ENCODE measurements at regions of chr11 and their contacts with region 1.

Region 1: GRCh38 chr11:58900479-58901420 is 38.5 kb upstream of the GLYATL1 start:
- DNase-seq: peak; percentile 78 to 83 (median 82)
- H3K4me3 ChIP-seq: peak overlapping the region in 3 of 7 experiments; percentile 20 to 68 (median 58)
- H3K27ac ChIP-seq: no peak overlapping the region
- H3K4me1 ChIP-seq: peaks cover 0 to 26% (median 13%) of the 10 kb centered on the region in 4 experiments
- H3K27me3 ChIP-seq: peaks cover 0 to 28% (median 5%) of the 10 kb centered on the region in 5 experiments

Region 2: DNA sequence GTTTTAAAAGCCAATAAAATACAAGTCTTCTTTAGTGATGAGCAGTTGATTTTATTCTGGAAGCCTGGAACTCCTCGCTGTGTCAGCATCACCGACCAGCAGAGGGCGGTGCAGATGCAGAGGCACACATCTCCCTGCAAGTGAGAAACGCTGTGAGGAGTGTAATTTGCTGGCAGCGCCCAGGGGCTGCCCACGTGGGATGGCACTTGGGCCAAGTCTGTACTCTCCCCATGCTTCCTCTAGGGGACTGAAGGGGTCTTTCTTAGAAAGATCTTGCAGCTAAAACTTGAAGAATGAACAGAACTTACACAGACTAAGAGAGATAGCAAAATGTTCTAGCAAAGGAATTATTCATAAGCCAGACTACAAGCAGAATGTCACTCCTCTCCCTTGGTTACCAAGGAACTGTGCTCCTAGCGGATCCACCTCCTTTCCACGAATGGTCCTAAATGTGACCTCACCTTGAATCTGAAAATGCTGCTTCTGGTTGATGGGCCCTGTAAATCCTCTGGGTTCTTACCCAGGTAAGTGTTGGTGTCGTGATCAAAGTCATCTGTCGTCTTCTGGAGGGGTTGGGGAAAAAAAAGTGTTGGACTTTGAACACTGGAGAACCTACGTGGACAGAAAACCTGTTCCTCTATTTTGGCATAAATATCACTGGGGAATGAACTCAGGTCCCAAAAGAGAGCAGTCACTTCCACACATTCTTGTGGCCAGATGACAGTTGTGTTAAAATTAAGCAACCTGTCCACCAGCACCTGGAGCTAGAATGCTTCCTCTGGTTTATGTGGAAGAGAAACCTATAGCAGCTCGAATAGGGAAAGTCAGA is 246.5 kb before region 1 on chr11:
- CTCF ChIA-PET with region 1: interaction called, 42 read pairs
- POLR2A ChIA-PET with region 1: no interaction called
- DNase-seq: peak; percentile 88 to 95 (median 94)
- H3K4me3 ChIP-seq: no peak overlapping the region
- H3K27ac ChIP-seq: no peak overlapping the region
- H3K4me1 ChIP-seq: peaks cover 0 to 4% (median 0%) of the 10 kb centered on the region in 4 experiments
- H3K27me3 ChIP-seq: no peaks in the 10 kb centered on the region

Region 3: GRCh38 chr11:58867556-58867955 is 33.2 kb before region 1 on chr11:
- CTCF ChIA-PET with region 1: no interaction called
- POLR2A ChIA-PET with region 1: no interaction called
- DNase-seq: no peak
- H3K4me3 ChIP-seq: no peak overlapping the region
- H3K27ac ChIP-seq: no peak overlapping the region
- H3K4me1 ChIP-seq: no peaks in the 10 kb centered on the region
- H3K27me3 ChIP-seq: no peaks in the 10 kb centered on the region

Region 4: GRCh38 chr11:58919980-58920379 is 19.2 kb after region 1 on chr11:
- CTCF ChIA-PET with region 1: interaction called, 31 read pairs
- POLR2A ChIA-PET with region 1: no interaction called
- DNase-seq: peak in 2 of 3 donors; percentile 31 to 34
- H3K4me3 ChIP-seq: no peak overlapping the region
- H3K27ac ChIP-seq: no peak overlapping the region
- H3K4me1 ChIP-seq: peaks cover 0 to 8% (median 2%) of the 10 kb centered on the region in 4 experiments
- H3K27me3 ChIP-seq: no peaks in the 10 kb centered on the region

Region 5: GRCh38 chr11:59216641-59217564 is 316.2 kb after region 1 on chr11:
- CTCF ChIA-PET with region 1: no interaction called
- POLR2A ChIA-PET with region 1: no interaction called
- DNase-seq: peak; percentile 84 to 98 (median 96)
- H3K4me3 ChIP-seq: peak overlapping the region in 5 of 7 experiments; percentile 0 to 40 (median 30)
- H3K27ac ChIP-seq: peak overlapping the region in 1 of 2 experiments; percentile 37
- H3K4me1 ChIP-seq: peaks cover 11 to 22% (median 18%) of the 10 kb centered on the region in 4 experiments
- H3K27me3 ChIP-seq: no peaks in the 10 kb centered on the region

Measured in common myeloid progenitor, CD34-positive (primary cell).